ENCODE measurements at regions of chr11 and their contacts with region 1.

Region 1: GRCh38 chr11:26753723-26754504 is 32.1 kb upstream of the SLC5A12 start:
- DNase-seq: peak; percentile 74
- ATAC-seq: peak; percentile 86
- H3K4me3 ChIP-seq: no peak overlapping the region
- H3K27ac ChIP-seq: no peak overlapping the region
- H3K4me1 ChIP-seq: no peaks in the 10 kb centered on the region
- H3K27me3 ChIP-seq: no peaks in the 10 kb centered on the region
- CTCF ChIP-seq: peak; percentile 85
- POLR2A ChIP-seq: 0 out of 2 replicates have a peak, but pooled peaks have one; percentile 34
- RAD21 ChIP-seq: peak; percentile 90

Region 2: GRCh38 chr11:26297189-26297975 is 456.5 kb before region 1 on chr11:
- CTCF ChIA-PET with region 1: no interaction called
- POLR2A ChIA-PET with region 1: no interaction called
- dilution Hi-C with region 1: no loop called
- in situ Hi-C with region 1: no loop called
- intact Hi-C with region 1: loop called (anchors 2 kb)
- DNase-seq: peak; percentile 75
- ATAC-seq: peak; percentile 90
- H3K4me3 ChIP-seq: no peak overlapping the region
- H3K27ac ChIP-seq: no peak overlapping the region
- H3K4me1 ChIP-seq: no peaks in the 10 kb centered on the region
- H3K27me3 ChIP-seq: peaks cover 9% of the 10 kb centered on the region
- CTCF ChIP-seq: peak; percentile 77
- POLR2A ChIP-seq: no peak
- RAD21 ChIP-seq: peak; percentile 63

Region 3: DNA sequence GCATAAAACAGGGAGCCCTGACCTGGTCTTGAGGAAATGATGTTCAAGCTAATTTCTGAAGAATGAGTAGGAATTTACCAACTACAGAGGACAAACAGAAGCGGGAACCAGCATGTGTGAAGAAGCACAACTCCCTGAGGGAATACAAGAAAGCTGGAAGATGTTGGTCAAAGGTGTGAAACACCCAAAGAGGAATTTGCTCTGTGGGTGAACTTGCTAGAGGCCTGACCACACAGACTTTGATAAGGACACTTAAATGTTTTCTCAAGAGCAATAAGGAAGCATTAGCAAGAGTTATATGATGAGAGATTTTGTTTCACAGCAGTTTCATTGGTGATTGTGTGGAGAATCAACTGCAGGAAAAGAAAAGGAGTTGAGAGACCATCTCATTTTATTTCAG is 49.7 kb before region 1 on chr11:
- CTCF ChIA-PET with region 1: no interaction called
- POLR2A ChIA-PET with region 1: no interaction called
- dilution Hi-C with region 1: no loop called
- in situ Hi-C with region 1: no loop called
- intact Hi-C with region 1: no loop called
- DNase-seq: no peak
- ATAC-seq: no peak
- H3K4me3 ChIP-seq: no peak overlapping the region
- H3K27ac ChIP-seq: no peak overlapping the region
- H3K4me1 ChIP-seq: no peaks in the 10 kb centered on the region
- H3K27me3 ChIP-seq: no peaks in the 10 kb centered on the region
- CTCF ChIP-seq: no peak
- POLR2A ChIP-seq: no peak
- RAD21 ChIP-seq: no peak

Region 4: GRCh38 chr11:26993965-26994457 is 240.1 kb after region 1 on chr11 and contains the start of gene FIBIN:
- CTCF ChIA-PET with region 1: no interaction called
- POLR2A ChIA-PET with region 1: no interaction called
- dilution Hi-C with region 1: no loop called
- in situ Hi-C with region 1: no loop called
- intact Hi-C with region 1: loop called (anchors 1 kb)
- DNase-seq: peak; percentile 70
- ATAC-seq: peak; percentile 56
- H3K4me3 ChIP-seq: peak within 1 kb of the TSS; percentile 78
- H3K27ac ChIP-seq: peak within 1 kb of the TSS; percentile 95
- H3K4me1 ChIP-seq: peaks cover 11% of the 10 kb centered on the region
- H3K27me3 ChIP-seq: no peaks in the 10 kb centered on the region
- CTCF ChIP-seq: no peak
- POLR2A ChIP-seq: no peak
- RAD21 ChIP-seq: no peak
- total RNA-seq, gene FIBIN: 5.7 and 7.5 TPM in 2 replicates

Region 5: DNA sequence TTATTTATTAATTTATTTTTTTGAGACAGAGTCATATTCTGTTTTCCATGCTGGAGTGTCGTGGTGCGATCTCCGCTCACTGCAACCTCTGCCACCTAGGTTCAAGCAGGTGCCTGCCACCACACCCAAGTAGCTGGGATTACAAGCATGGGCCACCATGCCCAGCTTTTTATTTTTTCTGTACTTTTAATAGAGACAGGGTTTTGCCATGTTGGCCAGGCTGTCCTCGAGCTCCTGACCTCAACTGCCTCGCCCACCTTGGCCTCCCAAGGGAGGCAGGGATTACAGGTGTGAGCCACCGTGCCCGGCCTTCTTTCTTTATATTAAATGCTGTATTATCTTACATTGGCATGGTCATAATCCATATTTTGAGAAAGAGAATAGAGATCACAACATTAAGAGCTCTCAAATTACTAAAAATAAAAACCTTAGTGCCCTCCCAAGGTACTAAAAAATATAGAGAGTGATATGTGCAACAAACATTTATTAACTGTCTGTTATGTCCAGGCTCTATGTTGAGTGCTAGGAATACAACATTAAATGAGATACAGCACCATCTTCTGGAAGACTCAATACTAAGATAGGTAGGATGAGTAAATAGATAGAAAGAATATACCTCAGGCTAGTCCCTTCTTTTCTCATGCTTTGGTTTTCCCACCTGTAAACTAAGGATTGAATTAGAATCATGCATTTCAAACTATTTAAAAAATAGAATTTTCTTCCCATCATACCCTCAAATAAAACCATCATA is 370.8 kb after region 1 on chr11:
- CTCF ChIA-PET with region 1: interaction called, 3 read pairs
- POLR2A ChIA-PET with region 1: no interaction called
- dilution Hi-C with region 1: loop called (anchors 25 kb)
- in situ Hi-C with region 1: no loop called
- intact Hi-C with region 1: loop called (anchors 1 kb)
- DNase-seq: peak; percentile 42
- ATAC-seq: peak; percentile 71
- H3K4me3 ChIP-seq: no peak overlapping the region
- H3K27ac ChIP-seq: no peak overlapping the region
- H3K4me1 ChIP-seq: no peaks in the 10 kb centered on the region
- H3K27me3 ChIP-seq: peaks cover 1% of the 10 kb centered on the region; the same call in 1 of the 2 replicates
- CTCF ChIP-seq: peak; percentile 53
- POLR2A ChIP-seq: no peak
- RAD21 ChIP-seq: peak; percentile 62

Region 6: DNA sequence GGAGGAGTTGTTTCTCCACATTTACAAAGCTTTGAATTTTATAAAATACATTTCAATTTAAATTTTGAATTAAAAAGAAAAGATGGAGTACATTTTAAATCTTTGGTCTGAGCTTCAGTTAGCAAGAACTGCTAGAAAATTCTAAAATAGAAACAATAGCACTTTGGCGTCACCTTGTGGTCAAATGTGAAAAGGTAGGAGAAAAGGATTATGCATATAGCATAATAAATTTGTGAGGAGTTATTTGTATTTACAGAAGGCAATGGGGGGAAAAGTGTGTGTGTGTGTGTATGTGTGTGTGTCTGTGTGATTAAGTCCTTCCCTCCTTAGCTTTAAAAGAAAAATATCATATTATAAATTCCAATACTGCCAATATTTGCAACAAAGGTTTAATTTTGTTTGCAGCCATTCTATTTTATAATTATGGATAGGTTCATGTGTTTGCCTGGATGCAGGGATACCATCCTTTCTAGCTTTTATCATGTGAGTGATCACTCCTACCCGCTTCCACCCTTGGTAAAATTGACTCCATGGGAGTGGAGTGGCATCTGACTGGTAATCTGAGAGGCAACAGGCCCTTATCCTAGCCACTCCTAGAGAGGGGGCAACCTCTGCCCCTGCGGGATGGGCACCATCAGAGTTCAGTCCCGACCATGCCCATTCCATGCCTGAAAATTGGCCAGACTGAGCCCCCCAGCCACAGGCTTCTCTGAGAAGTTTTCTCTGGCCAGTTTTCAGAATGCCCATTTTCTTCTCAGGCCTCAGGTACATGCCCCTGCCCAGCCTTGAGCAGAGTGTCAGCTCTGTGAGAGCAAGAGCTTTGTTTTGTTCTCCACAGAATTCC is 732.2 kb after region 1 on chr11:
- CTCF ChIA-PET with region 1: no interaction called
- POLR2A ChIA-PET with region 1: no interaction called
- dilution Hi-C with region 1: no loop called
- in situ Hi-C with region 1: loop called (anchors 25 kb)
- intact Hi-C with region 1: loop called (anchors 5 kb)
- DNase-seq: peak; percentile 61
- ATAC-seq: peak; percentile 81; the same call in 1 of the 2 replicates
- H3K4me3 ChIP-seq: no peak overlapping the region
- H3K27ac ChIP-seq: no peak overlapping the region
- H3K4me1 ChIP-seq: no peaks in the 10 kb centered on the region
- H3K27me3 ChIP-seq: no peaks in the 10 kb centered on the region
- CTCF ChIP-seq: peak; percentile 99
- POLR2A ChIP-seq: peak; percentile 36; the same call in 1 of the 2 replicates
- RAD21 ChIP-seq: peak; percentile 98